Ascending aorta (tissue), 2 donors: ENCODE measurements at regions of chr22 and their contacts with region 1.

Region 1: DNA sequence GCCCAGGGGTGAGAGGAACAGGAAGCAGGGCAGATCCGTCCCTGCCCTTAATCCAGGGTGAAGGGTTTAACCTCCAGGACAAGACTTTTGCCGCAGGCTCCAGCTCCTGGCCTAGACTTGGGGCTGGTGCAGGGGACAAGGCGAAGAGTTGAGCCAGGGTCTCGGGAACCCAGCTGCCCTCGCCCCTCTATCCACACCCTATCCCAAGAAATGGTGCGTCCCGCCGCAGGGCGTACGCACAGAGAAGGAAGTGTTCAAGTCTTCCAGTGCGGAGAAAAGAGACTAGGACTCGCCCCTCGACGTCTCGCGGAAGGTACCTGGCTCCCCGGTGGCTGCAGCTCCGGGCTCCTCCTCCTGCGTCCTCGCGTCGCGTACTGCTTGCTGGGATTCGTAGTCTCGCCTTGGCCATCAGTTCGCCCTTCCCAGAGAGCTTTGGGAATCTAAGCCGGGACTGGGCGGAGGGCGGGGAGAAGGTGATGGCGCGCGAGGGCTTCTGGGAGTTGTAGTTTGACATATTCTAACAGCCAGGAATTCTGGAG is at the start of gene ZMAT5:
- DNase-seq: peak; percentile 82 to 96
- H3K4me3 ChIP-seq: peak within 1 kb of the TSS; percentile 81 to 91
- H3K27ac ChIP-seq: peak within 1 kb of the TSS; percentile 70 to 78
- H3K4me1 ChIP-seq: peaks cover 9 to 17% of the 10 kb centered on the region in 2 donors
- H3K27me3 ChIP-seq: no peaks in the 10 kb centered on the region
- CTCF ChIP-seq: no peak
- total RNA-seq, gene ZMAT5: 59.3 TPM

Region 2: DNA sequence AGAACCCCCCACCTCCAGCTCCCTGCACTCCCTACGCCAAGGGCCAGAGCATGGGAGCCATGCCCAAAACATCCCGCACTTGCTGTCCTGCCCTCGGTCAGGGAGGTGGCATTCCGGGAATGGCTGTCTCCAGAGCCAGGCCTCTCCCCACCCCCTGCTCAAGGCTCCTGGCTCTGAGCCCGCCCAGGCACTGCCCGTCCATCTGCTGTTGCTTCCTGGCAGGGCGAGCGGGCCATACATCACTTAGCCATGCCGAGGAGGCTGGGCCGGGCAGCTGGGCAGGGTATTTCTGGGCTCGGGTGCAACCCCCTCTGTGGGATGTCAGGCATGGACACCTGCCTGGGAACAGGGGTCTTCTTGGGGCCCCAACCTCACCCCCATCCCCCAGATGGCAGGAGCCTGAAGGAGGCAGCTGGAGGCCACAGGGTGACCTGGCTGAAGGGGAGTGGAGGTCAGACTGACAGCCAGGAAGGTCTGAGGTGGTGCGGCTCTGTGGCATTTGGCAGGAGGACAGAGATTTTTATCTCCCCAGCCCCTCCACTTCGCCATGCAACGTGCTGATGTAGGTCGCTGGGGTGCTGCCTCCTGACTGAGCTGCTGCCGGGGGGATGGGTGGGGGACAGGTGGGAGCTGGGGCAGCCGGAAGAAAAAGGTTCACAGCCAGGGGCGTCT is 55.6 kb before region 1 on chr22:
- intact Hi-C with region 1: no loop called
- DNase-seq: no peak
- H3K4me3 ChIP-seq: no peak overlapping the region
- H3K27ac ChIP-seq: no peak overlapping the region
- H3K4me1 ChIP-seq: no peaks in the 10 kb centered on the region
- H3K27me3 ChIP-seq: peaks cover 4% of the 10 kb centered on the region
- CTCF ChIP-seq: no peak

Region 3: DNA sequence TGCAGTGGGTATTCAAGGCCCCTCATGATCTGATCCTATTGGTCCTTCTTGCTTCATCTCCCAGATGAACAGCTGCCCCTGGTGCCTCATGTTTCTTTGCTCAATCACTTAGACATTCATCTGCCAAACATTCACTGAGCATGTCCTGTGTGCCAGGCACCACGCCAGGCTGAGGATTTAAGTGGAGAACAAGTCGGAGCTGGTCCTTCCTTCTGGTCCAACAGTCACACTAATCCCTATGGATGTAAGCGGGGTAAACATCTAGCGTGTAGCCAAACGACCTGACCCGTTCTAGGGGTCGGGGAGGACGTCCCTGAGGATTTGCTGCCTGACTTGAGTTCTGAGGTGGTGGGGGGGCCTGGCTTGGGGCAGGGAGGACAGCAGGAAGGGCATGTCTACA is 21.8 kb before region 1 on chr22:
- intact Hi-C with region 1: no loop called
- DNase-seq: no peak
- H3K4me3 ChIP-seq: no peak overlapping the region
- H3K27ac ChIP-seq: no peak overlapping the region
- H3K4me1 ChIP-seq: no peaks in the 10 kb centered on the region
- H3K27me3 ChIP-seq: no peaks in the 10 kb centered on the region
- CTCF ChIP-seq: no peak

Region 4: GRCh38 chr22:29798801-29799680 is 32.3 kb after region 1 on chr22:
- intact Hi-C with region 1: loop called (anchors 1 kb)
- DNase-seq: peak; percentile 76 to 92
- H3K4me3 ChIP-seq: peak overlapping the region in 1 of 2 donors; percentile 14
- H3K27ac ChIP-seq: peak overlapping the region; percentile 51 to 62
- H3K4me1 ChIP-seq: peaks cover 0 to 11% of the 10 kb centered on the region in 2 donors
- H3K27me3 ChIP-seq: no peaks in the 10 kb centered on the region
- CTCF ChIP-seq: no peak

Region 5: DNA sequence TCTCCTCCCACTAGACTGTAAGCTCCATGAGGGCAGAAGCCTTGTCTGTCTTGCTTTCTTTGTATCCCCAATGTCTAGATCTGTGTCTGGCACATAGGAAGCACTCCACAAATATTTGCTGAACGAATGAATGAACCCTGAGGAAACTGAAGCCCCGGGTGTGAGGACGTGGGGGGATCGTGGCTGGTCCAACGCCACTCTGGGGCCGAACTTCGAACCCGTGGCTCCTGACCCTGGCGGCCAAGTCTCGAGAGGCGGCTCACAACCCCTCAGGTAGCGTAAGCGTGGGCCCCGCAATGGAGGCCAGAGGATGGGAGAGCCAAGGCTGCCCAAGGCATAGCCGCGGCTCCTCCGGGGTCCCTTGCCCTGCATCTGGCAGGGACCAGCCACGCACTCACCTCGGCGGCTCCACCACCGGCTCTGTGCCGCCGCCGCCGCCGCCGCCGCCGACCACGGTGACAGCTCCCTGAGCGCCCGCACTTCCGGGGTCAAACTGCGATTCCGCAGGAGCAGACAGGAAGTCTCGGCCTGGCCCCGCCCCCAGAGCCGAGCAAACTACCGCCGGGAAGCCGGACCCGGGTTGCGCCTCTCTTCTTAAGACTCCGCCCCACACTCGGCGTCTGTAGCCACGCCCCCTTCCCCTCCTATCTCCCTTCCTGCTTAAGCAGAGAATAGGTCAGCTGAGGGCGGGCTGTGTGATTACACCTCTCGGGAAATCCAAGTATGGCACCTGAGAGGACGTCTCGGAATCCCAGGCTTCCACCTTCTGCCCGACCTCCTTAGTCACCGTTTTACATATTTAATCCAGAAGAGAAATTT is 71.3 kb after region 1 on chr22 and contains the start of gene ASCC2:
- intact Hi-C with region 1: loop called (anchors 2 kb)
- DNase-seq: peak; percentile 95 to 100
- H3K4me3 ChIP-seq: peak within 1 kb of the TSS; percentile 69 to 71
- H3K27ac ChIP-seq: peak within 1 kb of the TSS; percentile 68 to 83
- H3K4me1 ChIP-seq: peaks cover 5 to 13% of the 10 kb centered on the region in 2 donors
- H3K27me3 ChIP-seq: no peaks in the 10 kb centered on the region
- CTCF ChIP-seq: peak in 1 of 3 experiments; percentile 8
- total RNA-seq, gene ASCC2: 24.9 TPM

Region 6: GRCh38 chr22:29883045-29883774 is 116.5 kb after region 1 on chr22 and contains the start of gene MTMR3:
- intact Hi-C with region 1: loop called (anchors 2 kb)
- DNase-seq: peak; percentile 76 to 96
- H3K4me3 ChIP-seq: peak within 1 kb of the TSS; percentile 79 to 82
- H3K27ac ChIP-seq: peak within 1 kb of the TSS; percentile 89 to 93
- H3K4me1 ChIP-seq: peaks cover 0 to 7% of the 10 kb centered on the region in 2 donors
- H3K27me3 ChIP-seq: no peaks in the 10 kb centered on the region
- CTCF ChIP-seq: peak; percentile 47 to 64 (median 61)
- total RNA-seq, gene MTMR3: 26.1 TPM

Region 7: DNA sequence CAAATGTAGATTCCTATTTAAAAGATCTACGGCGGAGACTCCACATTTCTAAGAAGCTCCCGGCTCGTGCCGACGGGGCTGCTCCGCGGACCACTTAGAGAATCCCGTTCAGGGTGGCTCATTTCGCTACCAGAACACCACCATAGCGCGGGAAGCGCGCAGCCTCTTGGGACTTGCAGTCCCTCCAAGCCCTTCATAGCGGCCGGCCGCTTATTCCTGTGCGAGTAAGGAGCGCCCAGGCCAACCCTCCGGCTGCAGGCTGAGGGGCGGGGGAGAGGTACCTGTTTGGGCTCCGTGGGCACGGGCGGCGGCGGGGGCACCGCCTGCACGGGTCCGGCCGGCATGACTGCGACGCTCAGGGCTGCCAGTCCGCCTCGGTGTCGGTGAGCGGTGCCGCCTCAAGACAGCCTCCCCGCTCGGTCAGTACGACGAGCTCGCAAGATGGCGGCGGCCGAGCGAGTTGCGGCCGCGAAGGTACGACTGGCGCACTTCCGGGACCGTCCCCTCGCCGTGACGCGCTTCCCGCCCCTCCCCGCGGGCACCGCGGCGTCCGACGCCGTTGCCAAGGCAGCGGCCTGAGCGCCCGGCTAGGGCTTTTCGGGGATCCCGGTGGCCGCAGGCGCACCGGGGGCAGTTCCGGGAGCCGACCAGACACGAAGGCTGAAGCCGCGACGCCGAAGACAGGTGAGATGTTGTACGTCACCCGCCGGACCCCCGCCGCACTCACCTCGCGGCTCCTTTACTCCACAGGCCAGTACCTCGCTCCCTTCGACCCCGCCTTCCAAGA is 589.9 kb after region 1 on chr22 and contains the starts of genes CCDC157 and SF3A1:
- intact Hi-C with region 1: loop called (anchors 1 kb)
- DNase-seq: peak; percentile 39 to 92
- H3K4me3 ChIP-seq: peak within 1 kb of the TSS; percentile 75 to 97
- H3K27ac ChIP-seq: peak within 1 kb of the TSS; percentile 92 to 99
- H3K4me1 ChIP-seq: peaks cover 11 to 24% of the 10 kb centered on the region in 2 donors
- H3K27me3 ChIP-seq: no peaks in the 10 kb centered on the region
- CTCF ChIP-seq: no peak
- total RNA-seq, gene CCDC157: 7.0 TPM
- total RNA-seq, gene SF3A1: 92.9 TPM